H1 (cell line): ENCODE measurements at regions of chr1 and their contacts with region 1.

Region 1: DNA sequence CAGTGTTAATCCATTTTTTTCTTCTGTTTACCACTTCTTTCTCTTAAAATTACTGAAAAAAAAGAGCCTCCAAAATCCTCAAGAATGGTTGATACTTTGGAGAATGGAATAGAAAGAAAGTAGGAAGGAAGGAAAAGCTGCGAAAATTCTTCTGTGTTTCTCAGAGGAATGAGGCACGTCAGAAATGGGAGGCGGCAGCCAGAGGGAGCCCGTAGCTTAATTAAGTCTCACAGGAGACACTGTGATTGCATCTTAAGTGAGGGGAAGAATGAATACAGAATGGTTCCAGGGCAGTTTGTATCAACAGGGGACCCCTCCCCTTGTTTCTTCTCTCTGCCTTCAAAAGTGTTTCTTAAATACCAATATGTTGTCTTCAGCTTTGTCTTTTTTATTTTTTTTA is 1099.5 kb downstream of the PLA2G4A start:
- DNase-seq: peak in 1 of 2 experiments; percentile 25
- H3K4me3 ChIP-seq: no peak overlapping the region
- H3K27ac ChIP-seq: no peak overlapping the region
- H3K4me1 ChIP-seq: peaks cover 2 to 5% (median 4%) of the 10 kb centered on the region in 4 experiments; a peak in 3 of 7 replicates
- H3K27me3 ChIP-seq: no peaks in the 10 kb centered on the region
- CTCF ChIP-seq: peak; percentile 32 to 59 (median 56)
- EP300 ChIP-seq: no peak
- POLR2A ChIP-seq: no peak
- RAD21 ChIP-seq: peak; percentile 86 to 88

Region 2: GRCh38 chr1:187942986-187943385 is 14.7 kb after region 1 on chr1:
- CTCF ChIA-PET with region 1: interaction called, 11 read pairs
- POLR2A ChIA-PET with region 1: no interaction called
- DNase-seq: no peak
- H3K4me3 ChIP-seq: no peak overlapping the region
- H3K27ac ChIP-seq: no peak overlapping the region
- H3K4me1 ChIP-seq: no peaks in the 10 kb centered on the region
- H3K27me3 ChIP-seq: no peaks in the 10 kb centered on the region
- CTCF ChIP-seq: no peak
- EP300 ChIP-seq: no peak
- POLR2A ChIP-seq: no peak
- RAD21 ChIP-seq: no peak

Region 3: DNA sequence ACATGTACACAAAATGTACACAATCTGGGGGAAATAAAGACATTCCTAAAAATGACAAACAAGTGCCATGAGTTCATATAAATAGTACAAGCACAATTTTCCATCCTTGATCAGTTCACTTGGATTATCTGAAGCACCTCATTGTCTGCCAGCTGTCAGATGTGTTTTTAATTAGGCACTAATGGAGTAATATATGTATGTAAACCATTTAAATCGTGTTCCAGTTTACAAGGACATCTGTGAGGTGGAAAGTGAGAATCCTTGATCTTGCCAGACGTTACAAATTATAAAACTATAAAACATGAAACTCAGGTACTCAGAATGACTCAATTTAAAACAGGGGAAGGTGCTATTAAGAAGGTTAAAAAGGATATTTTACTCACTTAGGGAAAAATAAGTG is 212.7 kb after region 1 on chr1:
- CTCF ChIA-PET with region 1: no interaction called
- POLR2A ChIA-PET with region 1: no interaction called
- DNase-seq: no peak
- H3K4me3 ChIP-seq: no peak overlapping the region
- H3K27ac ChIP-seq: no peak overlapping the region
- H3K4me1 ChIP-seq: no peaks in the 10 kb centered on the region
- H3K27me3 ChIP-seq: no peaks in the 10 kb centered on the region
- CTCF ChIP-seq: no peak
- EP300 ChIP-seq: no peak
- POLR2A ChIP-seq: no peak
- RAD21 ChIP-seq: no peak